ENCODE measurements at regions of chr6 and their contacts with region 1.

Region 1: DNA sequence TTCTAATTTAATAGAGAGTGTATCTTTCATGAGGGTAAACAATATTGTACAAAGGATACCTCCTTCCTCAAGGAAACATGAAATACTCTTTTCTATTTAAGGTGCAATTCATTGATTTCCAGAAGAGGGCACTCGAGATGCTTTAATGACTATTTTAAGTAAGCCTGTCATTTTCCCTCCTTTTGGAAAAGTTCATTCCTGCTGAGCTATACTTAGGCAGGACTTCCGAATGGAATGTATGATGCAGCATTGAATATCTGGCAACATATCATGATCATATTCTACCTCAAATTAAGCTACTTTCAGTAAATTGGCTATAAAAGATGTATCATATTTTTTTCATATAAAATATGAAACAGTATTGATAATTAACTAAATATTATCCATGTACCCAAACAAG is 5.0 kb downstream of the DST start:
- DNase-seq: peak; percentile 67
- ATAC-seq: peak; percentile 64
- H3K4me3 ChIP-seq: no peak overlapping the region
- H3K27ac ChIP-seq: no peak overlapping the region
- H3K4me1 ChIP-seq: peaks cover 13% of the 10 kb centered on the region
- H3K27me3 ChIP-seq: no peaks in the 10 kb centered on the region
- CTCF ChIP-seq: peak; percentile 83
- EP300 ChIP-seq: no peak
- POLR2A ChIP-seq: no peak
- RAD21 ChIP-seq: peak; percentile 77

Region 2: GRCh38 chr6:56683882-56684281 is 46.2 kb after region 1 on chr6:
- CTCF ChIA-PET with region 1: no interaction called
- POLR2A ChIA-PET with region 1: interaction called, 18 read pairs
- in situ Hi-C with region 1: no loop called
- intact Hi-C with region 1: no loop called
- DNase-seq: peak; percentile 98
- ATAC-seq: peak; percentile 92
- H3K4me3 ChIP-seq: no peak overlapping the region; a peak in 2 of 6 replicates
- H3K27ac ChIP-seq: peak overlapping the region; percentile 28
- H3K4me1 ChIP-seq: peaks cover 70% of the 10 kb centered on the region
- H3K27me3 ChIP-seq: no peaks in the 10 kb centered on the region
- CTCF ChIP-seq: no peak
- EP300 ChIP-seq: peak; percentile 79 to 94
- POLR2A ChIP-seq: no peak
- RAD21 ChIP-seq: no peak

Region 3: DNA sequence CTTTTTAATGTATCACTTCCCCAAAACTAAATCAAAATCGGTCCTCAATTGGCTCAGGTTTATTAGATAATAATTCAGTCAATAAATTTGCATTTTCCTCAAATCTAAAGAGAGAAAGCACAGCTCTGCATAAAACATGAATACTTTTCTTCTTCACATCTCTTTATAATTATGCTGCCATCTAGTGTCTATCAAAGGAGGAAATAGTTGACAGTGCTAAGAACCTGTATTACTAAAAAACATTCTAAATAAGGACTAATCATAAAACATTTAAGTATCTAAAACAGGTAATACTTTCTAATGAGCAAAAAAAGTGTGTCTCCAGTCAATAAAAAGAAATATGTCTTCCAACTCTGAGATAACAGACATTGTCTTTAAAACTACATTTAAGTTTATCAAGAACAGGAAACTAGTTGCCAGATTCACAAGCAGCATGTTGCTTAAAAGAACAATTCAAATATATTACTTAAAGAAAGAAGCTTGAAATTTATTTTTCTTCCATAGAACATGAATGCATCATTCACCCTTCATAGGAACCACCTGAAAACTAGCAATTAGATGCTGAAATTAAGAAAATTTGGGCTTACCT is 61.5 kb after region 1 on chr6:
- CTCF ChIA-PET with region 1: interaction called, 65 read pairs
- POLR2A ChIA-PET with region 1: no interaction called
- in situ Hi-C with region 1: loop called (anchors 5 kb)
- intact Hi-C with region 1: loop called (anchors 1 kb)
- DNase-seq: peak; percentile 43
- ATAC-seq: peak; percentile 54; the same call in 2 of the 3 replicates
- H3K4me3 ChIP-seq: no peak overlapping the region
- H3K27ac ChIP-seq: no peak overlapping the region
- H3K4me1 ChIP-seq: no peaks in the 10 kb centered on the region
- H3K27me3 ChIP-seq: no peaks in the 10 kb centered on the region
- CTCF ChIP-seq: peak; percentile 68
- EP300 ChIP-seq: no peak
- POLR2A ChIP-seq: no peak
- RAD21 ChIP-seq: peak; percentile 40; the same call in 1 of the 2 replicates

Region 4: GRCh38 chr6:56764081-56764566 is 126.5 kb after region 1 on chr6:
- CTCF ChIA-PET with region 1: interaction called, 3 read pairs
- POLR2A ChIA-PET with region 1: no interaction called
- in situ Hi-C with region 1: loop called (anchors 5 kb)
- intact Hi-C with region 1: no loop called
- DNase-seq: peak; percentile 69
- ATAC-seq: peak; percentile 99
- H3K4me3 ChIP-seq: no peak overlapping the region
- H3K27ac ChIP-seq: no peak overlapping the region
- H3K4me1 ChIP-seq: peaks cover 12% of the 10 kb centered on the region
- H3K27me3 ChIP-seq: no peaks in the 10 kb centered on the region
- CTCF ChIP-seq: peak; percentile 81
- EP300 ChIP-seq: no peak
- POLR2A ChIP-seq: no peak
- RAD21 ChIP-seq: peak; percentile 44; the same call in 1 of the 2 replicates

Region 5: GRCh38 chr6:56851541-56852259 is 214.1 kb after region 1 on chr6:
- CTCF ChIA-PET with region 1: interaction called, 5 read pairs
- POLR2A ChIA-PET with region 1: no interaction called
- in situ Hi-C with region 1: loop called (anchors 10 kb)
- intact Hi-C with region 1: loop called (anchors 1 kb)
- DNase-seq: peak; percentile 72
- ATAC-seq: peak; percentile 98
- H3K4me3 ChIP-seq: no peak overlapping the region
- H3K27ac ChIP-seq: no peak overlapping the region
- H3K4me1 ChIP-seq: no peaks in the 10 kb centered on the region
- H3K27me3 ChIP-seq: no peaks in the 10 kb centered on the region
- CTCF ChIP-seq: peak; percentile 82
- EP300 ChIP-seq: no peak
- POLR2A ChIP-seq: no peak
- RAD21 ChIP-seq: peak; percentile 66